Activated CD4-positive, alpha-beta memory T cell treated with anti-CD3 and anti-CD28 coated beads, Interleukin-2, amount 10 ng/mL, durations not matched to agents 7 days and 5 days (primary cell): ENCODE measurements at regions of chrX and their contacts with region 1.

Region 1: GRCh38 chrX:133335027-133335426 is 80.3 kb downstream of the GPC4 start:
- DNase-seq: no peak
- H3K4me3 Mint-ChIP-seq: no peak overlapping the region
- H3K27ac Mint-ChIP-seq: no peak overlapping the region
- H3K4me1 Mint-ChIP-seq: no peaks in the 10 kb centered on the region
- H3K27me3 Mint-ChIP-seq: no peaks in the 10 kb centered on the region

Region 2: GRCh38 chrX:133346026-133346425 is 11.0 kb after region 1 on chrX:
- CTCF ChIA-PET with region 1: interaction called, 12 read pairs
- POLR2A ChIA-PET with region 1: no interaction called
- DNase-seq: no peak
- H3K4me3 Mint-ChIP-seq: no peak overlapping the region
- H3K27ac Mint-ChIP-seq: no peak overlapping the region
- H3K4me1 Mint-ChIP-seq: no peaks in the 10 kb centered on the region
- H3K27me3 Mint-ChIP-seq: no peaks in the 10 kb centered on the region

Region 3: GRCh38 chrX:133670383-133670782 is 335.4 kb after region 1 on chrX:
- CTCF ChIA-PET with region 1: interaction called, 13 read pairs
- POLR2A ChIA-PET with region 1: no interaction called
- DNase-seq: no peak
- H3K4me3 Mint-ChIP-seq: no peak overlapping the region
- H3K27ac Mint-ChIP-seq: no peak overlapping the region
- H3K4me1 Mint-ChIP-seq: no peaks in the 10 kb centered on the region
- H3K27me3 Mint-ChIP-seq: no peaks in the 10 kb centered on the region